ENCODE measurements at regions of chr14 and their contacts with region 1.

Region 1: DNA sequence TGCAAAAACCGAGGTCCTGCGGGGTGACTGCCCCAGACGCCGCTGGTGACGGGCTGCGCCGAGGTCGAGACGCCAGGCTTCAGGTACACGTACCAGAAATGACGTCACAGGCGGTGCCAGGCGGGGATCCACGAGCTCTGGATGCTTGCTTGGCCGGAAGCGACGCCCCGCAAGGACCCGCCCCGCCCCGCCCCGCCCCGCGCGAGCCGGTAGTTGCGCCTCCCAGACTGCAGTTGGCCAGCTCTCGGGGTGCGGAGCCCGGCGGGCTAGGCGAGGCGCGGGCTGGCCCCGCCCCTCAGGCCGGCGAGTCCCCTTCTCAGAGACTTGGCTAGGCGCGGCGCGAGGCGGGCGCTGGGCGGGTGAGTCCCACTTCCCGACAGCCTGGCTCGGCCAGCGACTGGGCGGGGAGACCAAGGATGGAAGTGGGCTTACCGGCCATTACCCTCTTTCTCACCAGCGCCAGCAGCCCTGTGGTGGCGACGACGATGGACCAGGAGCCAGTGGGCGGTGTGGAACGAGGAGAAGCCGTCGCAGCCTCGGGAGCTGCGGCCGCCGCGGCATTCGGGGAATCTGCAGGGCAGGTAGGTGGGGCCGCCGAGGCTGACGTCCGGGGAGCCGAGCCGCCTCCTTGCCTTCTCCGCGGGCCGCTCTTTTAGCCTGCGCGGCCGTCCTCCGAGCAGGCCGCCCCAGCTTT is at the start of gene FAM177A1:
- DNase-seq: peak; percentile 93
- ATAC-seq: peak; percentile 94
- H3K4me3 Mint-ChIP-seq: peak within 1 kb of the TSS; percentile 96
- H3K27ac Mint-ChIP-seq: peak within 1 kb of the TSS; percentile 97
- H3K4me1 Mint-ChIP-seq: peaks cover 28% of the 10 kb centered on the region
- H3K27me3 Mint-ChIP-seq: no peaks in the 10 kb centered on the region
- CTCF ChIP-seq: no peak
- total RNA-seq, gene FAM177A1: 23.5 and 27.4 TPM in 2 replicates

Region 2: GRCh38 chr14:34461334-34462131 is 584.7 kb before region 1 on chr14:
- CTCF ChIA-PET with region 1: no interaction called
- POLR2A ChIA-PET with region 1: no interaction called
- intact Hi-C with region 1: loop called (anchors 2 kb)
- DNase-seq: no peak
- ATAC-seq: no peak
- H3K4me3 Mint-ChIP-seq: peak overlapping the region; percentile 88
- H3K27ac Mint-ChIP-seq: peak overlapping the region; percentile 76
- H3K4me1 Mint-ChIP-seq: peaks cover 15% of the 10 kb centered on the region
- H3K27me3 Mint-ChIP-seq: no peaks in the 10 kb centered on the region
- CTCF ChIP-seq: no peak

Region 3: DNA sequence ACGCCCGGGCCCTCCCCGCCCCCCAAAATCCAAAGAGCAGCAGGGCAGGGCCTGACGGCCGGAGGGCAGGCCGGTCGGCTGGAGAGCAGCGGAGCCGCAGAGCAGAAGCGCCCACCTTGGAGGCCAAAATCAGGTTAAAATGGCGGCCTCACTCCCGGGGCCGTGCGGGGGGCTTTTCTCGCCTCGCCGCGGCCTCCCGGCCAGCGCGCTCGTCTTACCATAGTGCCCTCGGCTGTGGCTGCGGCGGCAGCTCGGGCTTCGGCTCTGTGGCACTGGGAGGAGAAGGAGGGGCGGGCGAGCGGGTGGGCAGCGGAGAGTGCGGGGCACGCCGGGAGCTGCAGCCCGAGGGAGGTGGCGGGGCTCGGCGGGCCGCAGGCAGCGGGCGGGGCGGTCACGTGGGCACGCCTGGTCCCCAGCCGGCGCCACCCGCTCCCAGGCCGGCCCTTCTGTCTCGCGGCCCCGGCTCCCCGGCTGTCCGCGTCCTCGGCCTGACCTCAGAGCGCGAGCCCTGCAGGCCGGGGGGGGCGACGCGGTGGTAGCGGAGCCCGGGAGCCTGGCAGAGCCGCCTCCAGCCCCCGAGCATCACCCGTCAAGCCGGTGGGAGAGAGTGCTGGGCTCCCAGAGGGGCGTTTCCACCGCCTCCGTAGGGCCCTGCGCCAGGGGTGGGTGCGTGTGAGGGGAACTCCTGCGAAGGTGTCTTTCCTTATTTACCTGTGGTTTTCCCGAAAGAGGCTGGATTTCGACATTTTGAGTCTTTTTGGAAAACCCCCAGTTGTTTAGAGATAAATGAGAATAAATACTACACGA is 331.7 kb before region 1 on chr14 and contains the start of gene CFL2:
- CTCF ChIA-PET with region 1: no interaction called
- POLR2A ChIA-PET with region 1: interaction called, 6 read pairs
- intact Hi-C with region 1: loop called (anchors 2 kb)
- DNase-seq: peak; percentile 80
- ATAC-seq: peak; percentile 90
- H3K4me3 Mint-ChIP-seq: peak within 1 kb of the TSS; percentile 92
- H3K27ac Mint-ChIP-seq: peak within 1 kb of the TSS; percentile 89
- H3K4me1 Mint-ChIP-seq: peaks cover 32% of the 10 kb centered on the region
- H3K27me3 Mint-ChIP-seq: no peaks in the 10 kb centered on the region
- CTCF ChIP-seq: no peak
- total RNA-seq, gene CFL2: 19.1 and 20.8 TPM in 2 replicates

Region 4: GRCh38 chr14:35285168-35286002 is 239.2 kb after region 1 on chr14:
- CTCF ChIA-PET with region 1: no interaction called
- POLR2A ChIA-PET with region 1: no interaction called
- intact Hi-C with region 1: loop called (anchors 2 kb)
- DNase-seq: no peak
- ATAC-seq: peak; percentile 81
- H3K4me3 Mint-ChIP-seq: peak overlapping the region; percentile 80
- H3K27ac Mint-ChIP-seq: peak overlapping the region; percentile 90
- H3K4me1 Mint-ChIP-seq: peaks cover 52% of the 10 kb centered on the region
- H3K27me3 Mint-ChIP-seq: no peaks in the 10 kb centered on the region
- CTCF ChIP-seq: no peak

Region 5: DNA sequence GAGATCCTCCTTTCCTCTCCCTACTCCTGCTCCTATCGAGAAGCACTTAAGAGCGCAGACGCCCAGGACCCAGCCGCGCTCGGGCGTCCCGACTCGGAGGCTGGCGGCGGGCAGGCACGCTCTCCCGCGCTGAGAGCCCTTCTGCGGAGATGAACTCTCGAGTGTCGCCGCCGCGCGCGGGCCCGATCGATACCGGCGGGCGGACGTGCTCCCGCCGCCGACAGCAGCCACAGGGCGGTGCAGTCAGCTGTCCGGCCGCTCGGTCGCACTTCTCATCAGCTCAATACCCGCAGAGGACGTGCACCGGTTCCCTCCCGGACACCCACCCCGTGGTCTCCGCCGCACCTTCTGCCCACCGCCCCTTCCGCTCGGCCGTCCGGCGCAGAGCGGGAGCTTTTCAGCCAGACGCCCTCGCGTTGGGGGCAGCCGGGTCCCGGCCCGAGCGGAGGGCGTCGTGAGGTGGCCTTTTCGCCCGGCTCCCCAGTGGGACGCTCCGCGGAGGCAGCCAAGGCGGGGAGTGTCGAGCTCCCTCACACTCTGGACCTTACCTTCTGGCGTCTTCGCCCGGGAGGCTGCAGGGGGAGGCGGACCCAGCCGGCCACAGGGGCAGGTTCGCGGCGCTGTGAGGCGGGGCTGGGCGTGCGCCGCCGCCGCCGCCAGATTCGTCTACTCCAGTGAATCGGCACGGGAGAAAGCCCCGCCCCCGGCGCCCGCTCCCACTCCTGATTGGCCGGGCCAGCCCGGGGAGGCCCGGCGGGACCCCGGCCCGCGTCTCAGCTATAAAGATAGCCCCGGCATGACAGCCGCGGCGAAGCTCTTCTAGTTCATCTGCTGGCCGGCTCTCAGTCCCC is 487.4 kb after region 1 on chr14 and contains the start of gene INSM2:
- CTCF ChIA-PET with region 1: no interaction called
- POLR2A ChIA-PET with region 1: no interaction called
- intact Hi-C with region 1: loop called (anchors 10 kb)
- DNase-seq: peak; percentile 55
- ATAC-seq: peak; percentile 76
- H3K4me3 Mint-ChIP-seq: peak within 1 kb of the TSS; percentile 81
- H3K27ac Mint-ChIP-seq: no peak within 1 kb of the TSS
- H3K4me1 Mint-ChIP-seq: peaks cover 16% of the 10 kb centered on the region
- H3K27me3 Mint-ChIP-seq: peaks cover 41% of the 10 kb centered on the region
- CTCF ChIP-seq: no peak
- total RNA-seq, gene INSM2: not detected in 2 replicates

Region 6: GRCh38 chr14:35826218-35826951 is 780.2 kb after region 1 on chr14 and contains the start of gene BRMS1L:
- CTCF ChIA-PET with region 1: no interaction called
- POLR2A ChIA-PET with region 1: interaction called, 4 read pairs
- intact Hi-C with region 1: loop called (anchors 5 kb)
- DNase-seq: peak; percentile 90
- ATAC-seq: peak; percentile 96
- H3K4me3 Mint-ChIP-seq: peak within 1 kb of the TSS; percentile 87
- H3K27ac Mint-ChIP-seq: peak within 1 kb of the TSS; percentile 92
- H3K4me1 Mint-ChIP-seq: peaks cover 19% of the 10 kb centered on the region
- H3K27me3 Mint-ChIP-seq: no peaks in the 10 kb centered on the region
- CTCF ChIP-seq: no peak
- total RNA-seq, gene BRMS1L: 3.7 and 4.4 TPM in 2 replicates

Measured in activated B cell treated with CpG ODN at 0.5 μM for 24 hours (primary cell).